Gastrocnemius medialis (tissue), 4 donors: ENCODE measurements at regions of chr18 and their contacts with region 1.

Region 1: DNA sequence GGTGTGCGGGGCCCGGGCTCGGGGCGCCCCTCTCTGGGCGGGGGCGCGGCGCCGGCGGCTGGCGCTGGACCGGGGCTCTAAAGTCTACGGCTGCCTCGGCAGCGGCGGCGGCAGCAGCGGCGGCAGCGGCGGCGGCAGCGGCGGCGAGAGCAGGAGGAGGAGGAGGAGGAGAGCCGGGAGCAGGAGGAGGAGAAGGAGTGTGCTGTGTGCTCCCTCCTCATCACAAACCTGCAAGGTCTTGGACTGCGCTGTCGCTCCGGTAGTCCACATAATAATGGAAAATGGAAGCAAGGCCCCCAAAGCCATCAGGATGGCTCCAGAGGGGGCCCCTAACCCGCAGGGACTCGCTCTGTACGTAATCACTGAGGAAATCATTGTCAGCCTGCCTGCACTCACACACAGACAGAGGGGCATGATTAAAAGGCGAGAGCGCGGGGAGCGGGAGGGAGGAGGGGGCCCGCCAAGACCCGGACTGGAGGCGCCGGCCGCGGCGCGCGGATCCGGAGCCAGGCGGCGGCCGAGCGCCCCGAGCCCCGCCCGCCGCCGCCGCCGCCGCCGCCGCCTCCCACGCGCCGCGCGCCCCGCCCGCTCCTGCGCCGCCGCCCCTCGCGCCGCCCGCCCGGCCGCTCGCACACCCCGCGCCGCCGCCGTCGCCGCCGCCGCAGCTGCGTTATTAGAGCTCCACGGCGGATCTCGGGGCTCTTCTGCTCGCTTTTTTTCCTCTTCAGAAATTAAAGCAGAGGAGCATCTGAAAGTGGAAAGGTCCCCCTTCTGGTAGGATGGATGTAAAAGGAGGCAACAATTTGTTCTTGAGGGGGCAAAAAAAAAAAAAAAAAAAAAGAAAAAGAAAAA is at the start of gene ZNF521:
- DNase-seq: peak; percentile 83 to 84
- ATAC-seq: peak; percentile 82 to 84
- H3K4me3 ChIP-seq: peak within 1 kb of the TSS; percentile 73 to 94 (median 84)
- H3K27ac ChIP-seq: peak within 1 kb of the TSS; percentile 87 to 91 (median 90)
- H3K4me1 ChIP-seq: peaks cover 6 to 14% of the 10 kb centered on the region in 2 donors
- H3K27me3 ChIP-seq: no peaks in the 10 kb centered on the region
- CTCF ChIP-seq: no peak
- POLR2A ChIP-seq: peak; percentile 61 to 73
- total RNA-seq, gene ZNF521: 3.5 to 15.6 (median 4.7) TPM

Region 2: DNA sequence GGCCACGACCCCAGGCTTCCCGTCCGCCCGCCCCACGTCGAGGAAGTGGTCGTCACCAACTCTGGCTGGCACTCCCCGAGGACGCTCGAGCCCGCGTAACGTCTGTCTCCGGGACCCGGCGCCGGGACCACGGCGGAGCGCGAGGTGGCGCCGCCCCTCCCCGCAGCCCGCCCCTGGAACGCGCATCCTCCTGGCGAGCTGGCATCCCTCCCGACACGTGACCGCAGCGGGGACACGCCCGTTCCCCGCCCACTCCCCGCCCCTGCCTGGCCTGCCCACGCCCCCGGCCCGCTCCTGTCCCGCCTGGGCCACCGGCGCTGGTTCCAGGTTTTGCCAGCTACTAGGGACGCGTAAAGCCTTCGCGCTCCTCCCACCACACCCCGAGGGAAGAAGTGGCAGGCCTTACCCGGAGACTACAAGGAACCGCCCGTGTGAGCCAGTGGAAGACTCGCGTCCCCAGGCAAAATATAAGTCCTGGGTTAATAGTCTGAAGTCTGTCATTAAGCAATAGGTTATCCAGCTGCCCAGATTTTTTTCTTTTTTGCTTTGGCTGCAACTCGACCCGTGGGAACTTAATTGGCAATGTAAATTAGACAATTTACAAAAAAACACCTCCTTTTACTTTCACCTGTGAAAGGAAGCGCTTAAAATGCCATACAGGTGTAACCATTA is 954.2 kb before region 1 on chr18 and contains the start of gene OSBPL1A:
- in situ Hi-C with region 1: no loop called
- intact Hi-C with region 1: loop called (anchors 10 kb)
- DNase-seq: peak; percentile 71 to 73
- ATAC-seq: peak; percentile 69 to 83
- H3K4me3 ChIP-seq: peak within 1 kb of the TSS; percentile 61 to 82 (median 67)
- H3K27ac ChIP-seq: peak within 1 kb of the TSS; percentile 64 to 79 (median 72)
- H3K4me1 ChIP-seq: peaks cover 5 to 9% of the 10 kb centered on the region in 2 donors
- H3K27me3 ChIP-seq: peaks cover 28 to 32% (median 30%) of the 10 kb centered on the region in 3 donors
- CTCF ChIP-seq: no peak
- POLR2A ChIP-seq: peak; percentile 28 to 67
- total RNA-seq, gene OSBPL1A: 61.5 to 227 (median 98.7) TPM

Region 3: DNA sequence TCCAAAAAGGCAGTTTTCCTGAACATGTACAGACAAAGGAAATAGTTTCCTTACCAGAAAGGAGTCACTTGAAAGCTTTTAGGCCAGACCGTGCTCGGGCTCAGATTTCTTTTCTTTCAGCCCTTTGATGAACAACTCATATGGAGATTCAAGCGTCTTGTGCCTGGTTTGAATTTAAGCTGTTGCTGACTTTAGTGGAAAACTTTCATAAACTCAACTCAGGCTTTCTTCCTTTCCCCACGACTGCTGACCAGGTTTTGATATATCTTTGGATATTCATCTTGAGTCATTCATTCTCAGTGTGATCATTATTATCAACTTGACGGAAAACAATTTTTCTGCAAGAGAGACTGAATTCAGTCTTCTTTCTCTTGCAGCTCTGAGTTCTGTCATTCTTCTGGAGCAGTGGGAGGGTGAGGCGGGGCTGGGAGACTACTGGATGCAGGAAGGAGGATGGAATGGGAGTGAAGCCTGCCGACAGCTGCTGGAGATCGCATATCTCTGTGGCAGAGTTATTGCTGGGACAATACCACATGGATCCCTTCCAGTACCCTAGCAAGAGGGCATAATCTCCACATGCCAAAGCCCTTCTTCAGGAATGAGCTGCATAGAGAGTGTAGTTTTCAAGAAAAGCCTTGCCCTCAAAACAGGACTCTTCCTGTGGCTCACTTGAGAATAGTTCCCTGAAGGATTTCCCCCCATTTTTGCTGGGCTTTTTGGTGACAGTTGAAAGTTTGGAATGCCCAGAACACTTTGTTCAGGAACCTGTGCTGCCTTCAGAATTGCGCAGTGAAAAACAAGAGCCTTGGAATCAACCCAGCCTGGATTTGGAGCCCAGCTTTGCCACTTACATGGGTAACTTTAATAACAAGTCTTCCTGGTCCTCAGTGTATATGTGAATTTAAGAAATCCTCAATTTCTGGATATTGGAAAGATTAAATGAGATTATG is 364.4 kb before region 1 on chr18:
- in situ Hi-C with region 1: loop called in 1 of 4 experiments (anchors 25 kb)
- intact Hi-C with region 1: loop called (anchors 5 kb)
- DNase-seq: peak; percentile 82 to 91
- ATAC-seq: peak; percentile 81 to 84
- H3K4me3 ChIP-seq: peak overlapping the region; percentile 45 to 59 (median 48)
- H3K27ac ChIP-seq: peak overlapping the region; percentile 82 to 88 (median 86)
- H3K4me1 ChIP-seq: peaks cover 61 to 62% of the 10 kb centered on the region in 2 donors
- H3K27me3 ChIP-seq: no peaks in the 10 kb centered on the region
- CTCF ChIP-seq: no peak
- POLR2A ChIP-seq: peak; percentile 25 to 47

Region 4: GRCh38 chr18:25230658-25231326 is 121.2 kb before region 1 on chr18:
- in situ Hi-C with region 1: no loop called
- intact Hi-C with region 1: loop called (anchors 5 kb)
- DNase-seq: peak; percentile 68 to 78
- ATAC-seq: peak; percentile 94 to 95
- H3K4me3 ChIP-seq: peak overlapping the region in 2 of 4 donors; percentile 20 to 21
- H3K27ac ChIP-seq: peak overlapping the region; percentile 57 to 72 (median 68)
- H3K4me1 ChIP-seq: peaks cover 33% of the 10 kb centered on the region in 2 donors
- H3K27me3 ChIP-seq: no peaks in the 10 kb centered on the region
- CTCF ChIP-seq: no peak
- POLR2A ChIP-seq: no peak

Region 5: DNA sequence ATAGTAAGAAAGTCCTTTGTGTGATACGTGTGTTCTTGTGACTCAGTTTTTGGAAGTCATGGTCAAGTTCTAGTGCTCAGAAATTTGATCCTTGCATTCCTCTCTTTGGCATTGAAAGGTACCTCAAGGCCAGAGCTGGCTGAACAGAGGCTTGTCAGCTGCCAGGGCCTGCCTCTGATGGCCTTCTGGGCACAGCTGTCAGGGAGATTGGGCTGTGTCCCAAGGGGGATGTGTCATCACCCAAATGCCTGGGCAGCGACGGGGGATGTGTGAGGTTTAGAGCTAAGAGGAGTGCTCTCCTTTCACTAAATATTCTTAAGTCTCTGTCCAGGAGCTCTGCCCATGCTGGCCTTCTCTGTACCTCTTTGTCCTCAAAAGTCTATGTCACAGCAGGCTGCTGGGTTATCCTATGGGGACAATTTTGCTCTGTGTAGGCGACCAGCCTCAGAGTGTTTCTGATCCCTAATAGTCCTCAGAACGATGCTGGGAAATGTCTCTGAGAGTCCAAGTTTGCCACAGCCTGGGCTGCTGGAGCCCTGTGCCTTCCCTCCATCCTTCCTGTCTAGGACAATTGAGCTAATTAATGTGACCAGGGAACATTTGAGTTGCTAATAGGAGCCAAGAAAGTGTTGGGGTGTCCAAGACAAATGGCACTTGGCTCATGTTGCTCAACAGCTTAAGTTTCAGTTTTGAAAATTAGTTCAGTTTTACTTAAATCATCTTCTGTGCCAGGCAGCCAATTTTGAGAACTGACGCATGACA is 115.4 kb after region 1 on chr18:
- in situ Hi-C with region 1: no loop called
- intact Hi-C with region 1: loop called (anchors 2 kb)
- DNase-seq: peak; percentile 88 to 95
- ATAC-seq: peak; percentile 98 to 99
- H3K4me3 ChIP-seq: peak overlapping the region in 3 of 4 donors; percentile 3 to 25 (median 5)
- H3K27ac ChIP-seq: peak overlapping the region; percentile 73 to 84 (median 82)
- H3K4me1 ChIP-seq: peaks cover 31 to 36% of the 10 kb centered on the region in 2 donors
- H3K27me3 ChIP-seq: no peaks in the 10 kb centered on the region
- CTCF ChIP-seq: no peak
- POLR2A ChIP-seq: no peak